ENCODE measurements at regions of chr2 and their contacts with region 1.

Region 1: DNA sequence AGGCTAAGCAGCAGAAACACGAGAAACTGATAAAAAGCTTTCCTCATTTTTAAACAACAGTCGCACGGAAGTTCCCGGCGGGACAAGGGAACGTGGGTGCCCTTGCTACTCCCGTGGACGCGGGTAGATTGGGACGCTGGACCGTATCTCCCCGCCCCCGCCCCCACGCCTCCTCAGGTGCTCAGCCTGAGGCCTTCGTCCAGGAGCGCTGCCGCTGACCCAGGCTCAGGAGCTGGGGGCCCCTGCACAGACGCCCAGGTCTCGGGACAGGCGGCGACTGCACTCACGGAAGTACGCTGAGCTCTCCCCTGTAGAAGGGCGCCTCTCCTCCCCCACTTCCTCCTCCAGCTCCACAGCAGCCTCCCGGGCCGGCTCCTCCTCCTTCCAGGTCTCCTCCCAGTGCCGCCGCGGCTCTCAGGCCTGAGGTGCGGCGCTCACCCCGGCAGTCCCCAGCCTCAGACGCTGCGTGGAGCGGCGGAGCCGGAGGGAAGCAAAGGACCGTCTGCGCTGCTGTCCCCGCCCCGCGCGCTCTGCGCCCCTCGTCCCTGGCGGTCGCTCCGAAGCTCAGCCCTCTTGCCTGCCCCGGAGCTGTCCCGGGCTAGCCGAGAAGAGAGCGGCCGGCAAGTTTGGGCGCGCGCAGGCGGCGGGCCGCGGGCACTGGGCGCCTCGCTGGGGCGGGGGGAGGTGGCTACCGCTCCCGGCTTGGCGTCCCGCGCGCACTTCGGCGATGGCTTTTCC is at the start of gene ITGAV:
- DNase-seq: peak; percentile 91 to 94
- ATAC-seq: peak; percentile 91 to 96 (median 92)
- H3K4me3 ChIP-seq: peak within 1 kb of the TSS; percentile 69
- H3K27ac ChIP-seq: peak within 1 kb of the TSS; percentile 89
- H3K4me1 ChIP-seq: peaks cover 19% of the 10 kb centered on the region
- H3K27me3 ChIP-seq: no peaks in the 10 kb centered on the region
- CTCF ChIP-seq: no peak
- total RNA-seq, gene ITGAV: 25.4 to 67.4 (median 55.4) TPM

Region 2: DNA sequence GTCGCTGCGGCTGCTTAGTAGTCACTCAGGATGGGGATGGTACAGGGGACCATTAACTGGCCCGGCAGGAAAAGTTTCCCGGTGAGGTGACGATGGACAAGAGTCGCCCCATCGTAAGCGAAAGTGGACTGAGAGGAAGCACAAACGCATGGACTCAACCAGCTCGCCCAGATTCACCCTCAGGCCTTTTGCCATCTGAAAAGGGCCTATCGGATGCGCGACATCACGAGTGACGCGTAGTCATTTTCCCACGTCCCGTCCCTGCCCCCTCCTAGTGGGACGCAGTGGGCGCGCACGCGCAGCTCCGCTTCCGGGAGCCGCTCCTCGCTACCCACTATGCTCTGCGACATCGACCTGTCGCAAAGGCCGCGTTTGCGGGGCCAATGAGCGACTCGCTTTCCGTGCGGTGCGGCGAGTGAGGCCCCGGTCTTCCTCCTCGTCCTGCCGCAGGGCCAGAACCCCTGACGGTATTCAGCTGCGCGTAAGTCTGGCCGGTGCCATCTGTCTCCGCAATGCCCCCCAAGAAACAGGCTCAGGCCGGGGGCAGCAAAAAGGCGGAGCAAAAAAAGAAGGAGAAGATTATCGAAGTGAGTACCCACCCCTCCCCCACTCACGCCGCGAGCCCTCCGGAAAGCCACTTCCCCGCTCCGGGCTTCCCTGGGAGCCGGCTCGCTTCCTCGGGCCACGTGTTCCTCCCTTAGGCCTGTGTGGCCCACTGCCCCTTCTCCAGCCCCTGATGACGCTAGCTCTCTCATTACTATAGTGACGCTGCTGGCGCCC is 103.7 kb before region 1 on chr2 and contains the start of gene ZC3H15:
- intact Hi-C with region 1: loop called in 1 of 2 experiments (anchors 5 kb)
- DNase-seq: peak; percentile 98 to 99
- ATAC-seq: peak; percentile 98
- H3K4me3 ChIP-seq: peak within 1 kb of the TSS; percentile 72
- H3K27ac ChIP-seq: peak within 1 kb of the TSS; percentile 94
- H3K4me1 ChIP-seq: peaks cover 40% of the 10 kb centered on the region
- H3K27me3 ChIP-seq: no peaks in the 10 kb centered on the region
- CTCF ChIP-seq: no peak
- total RNA-seq, gene ZC3H15: 31.1 to 56.3 (median 51.2) TPM

Region 3: DNA sequence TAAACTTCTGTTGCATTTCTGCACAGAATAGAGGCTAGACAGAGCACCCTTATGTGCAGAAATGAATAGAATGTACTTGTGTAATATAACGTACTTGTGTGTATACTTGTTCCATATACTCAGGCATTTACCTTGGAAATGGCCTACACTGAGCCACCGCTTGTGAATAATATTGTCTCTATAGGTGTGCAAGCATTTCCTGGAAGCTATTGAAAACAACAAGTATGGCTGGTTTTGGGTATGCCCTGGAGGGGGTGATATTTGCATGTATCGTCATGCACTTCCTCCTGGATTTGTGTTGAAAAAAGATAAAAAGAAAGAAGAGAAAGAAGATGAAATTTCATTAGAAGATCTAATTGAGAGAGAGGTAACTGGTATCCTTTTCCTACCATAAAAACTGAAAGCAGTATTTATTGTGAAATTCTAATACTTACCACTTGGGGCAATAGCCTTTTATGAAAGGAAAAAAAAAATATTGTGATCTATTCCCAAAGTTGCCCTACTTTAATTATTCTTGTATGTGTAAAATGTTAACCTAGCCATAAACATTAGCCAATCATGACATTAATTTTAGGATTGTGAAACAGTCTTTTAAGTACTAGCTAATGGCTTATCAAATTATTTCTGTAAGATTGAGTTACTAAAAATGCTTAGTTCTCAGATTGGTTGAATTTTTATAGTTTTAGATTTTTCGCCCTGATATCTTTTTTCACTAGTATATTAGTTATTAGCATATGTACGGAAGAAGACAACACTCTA is 85.8 kb before region 1 on chr2:
- intact Hi-C with region 1: loop called in 1 of 2 experiments (anchors 5 kb)
- DNase-seq: no peak
- ATAC-seq: peak in 1 of 4 donors; percentile 56
- H3K4me3 ChIP-seq: no peak overlapping the region
- H3K27ac ChIP-seq: no peak overlapping the region
- H3K4me1 ChIP-seq: no peaks in the 10 kb centered on the region
- H3K27me3 ChIP-seq: no peaks in the 10 kb centered on the region
- CTCF ChIP-seq: peak; percentile 58

Region 4: DNA sequence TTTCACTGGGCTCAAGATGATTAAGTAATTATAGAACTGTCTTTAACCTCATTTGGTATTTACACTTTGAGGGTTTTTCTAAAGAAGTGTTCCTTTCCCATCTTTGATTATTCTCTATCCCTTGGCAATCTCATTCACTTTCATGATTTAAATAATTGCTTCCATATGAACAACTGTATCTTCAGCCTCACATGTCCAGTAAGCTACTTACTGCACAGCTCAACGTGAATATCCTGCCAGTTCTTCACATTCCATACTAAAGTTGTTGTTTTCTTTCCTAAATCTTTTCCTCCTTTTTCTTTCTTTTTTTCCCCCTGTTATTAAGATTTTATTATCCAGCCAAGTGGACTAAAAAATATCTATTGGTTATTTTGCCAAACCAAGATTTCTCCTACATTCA is 66.0 kb before region 1 on chr2:
- intact Hi-C with region 1: loop called (anchors 5 to 10 kb)
- DNase-seq: no peak
- ATAC-seq: no peak
- H3K4me3 ChIP-seq: no peak overlapping the region
- H3K27ac ChIP-seq: no peak overlapping the region
- H3K4me1 ChIP-seq: no peaks in the 10 kb centered on the region
- H3K27me3 ChIP-seq: no peaks in the 10 kb centered on the region
- CTCF ChIP-seq: no peak

Region 5: GRCh38 chr2:186641807-186642321 is 52.1 kb after region 1 on chr2:
- intact Hi-C with region 1: loop called in 1 of 2 experiments (anchors 5 kb)
- DNase-seq: no peak
- ATAC-seq: peak; percentile 87 to 98 (median 93)
- H3K4me3 ChIP-seq: no peak overlapping the region
- H3K27ac ChIP-seq: no peak overlapping the region
- H3K4me1 ChIP-seq: no peaks in the 10 kb centered on the region
- H3K27me3 ChIP-seq: no peaks in the 10 kb centered on the region
- CTCF ChIP-seq: peak; percentile 79

Region 6: DNA sequence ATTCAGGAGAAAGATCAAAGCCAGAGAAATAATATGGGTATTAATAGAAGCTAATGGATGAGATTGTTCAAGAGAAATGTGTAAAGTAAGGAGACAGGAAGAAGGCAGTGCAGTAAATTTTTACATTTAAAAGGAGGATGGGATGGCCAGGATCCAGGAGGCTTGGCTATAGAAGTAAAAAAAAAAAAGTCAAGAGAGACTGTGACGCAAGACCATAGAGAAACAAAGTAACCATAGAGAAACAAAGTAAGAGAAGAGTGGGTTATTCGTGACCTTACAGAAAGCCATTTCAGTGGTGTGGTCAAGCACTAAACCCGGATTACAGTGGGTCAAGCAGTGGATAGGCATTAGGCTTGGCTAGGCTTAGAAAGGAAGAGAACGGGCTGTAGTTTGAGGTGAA is 93.6 kb after region 1 on chr2:
- intact Hi-C with region 1: no loop called
- DNase-seq: no peak
- ATAC-seq: no peak
- H3K4me3 ChIP-seq: no peak overlapping the region
- H3K27ac ChIP-seq: no peak overlapping the region
- H3K4me1 ChIP-seq: no peaks in the 10 kb centered on the region
- H3K27me3 ChIP-seq: no peaks in the 10 kb centered on the region
- CTCF ChIP-seq: no peak

Region 7: DNA sequence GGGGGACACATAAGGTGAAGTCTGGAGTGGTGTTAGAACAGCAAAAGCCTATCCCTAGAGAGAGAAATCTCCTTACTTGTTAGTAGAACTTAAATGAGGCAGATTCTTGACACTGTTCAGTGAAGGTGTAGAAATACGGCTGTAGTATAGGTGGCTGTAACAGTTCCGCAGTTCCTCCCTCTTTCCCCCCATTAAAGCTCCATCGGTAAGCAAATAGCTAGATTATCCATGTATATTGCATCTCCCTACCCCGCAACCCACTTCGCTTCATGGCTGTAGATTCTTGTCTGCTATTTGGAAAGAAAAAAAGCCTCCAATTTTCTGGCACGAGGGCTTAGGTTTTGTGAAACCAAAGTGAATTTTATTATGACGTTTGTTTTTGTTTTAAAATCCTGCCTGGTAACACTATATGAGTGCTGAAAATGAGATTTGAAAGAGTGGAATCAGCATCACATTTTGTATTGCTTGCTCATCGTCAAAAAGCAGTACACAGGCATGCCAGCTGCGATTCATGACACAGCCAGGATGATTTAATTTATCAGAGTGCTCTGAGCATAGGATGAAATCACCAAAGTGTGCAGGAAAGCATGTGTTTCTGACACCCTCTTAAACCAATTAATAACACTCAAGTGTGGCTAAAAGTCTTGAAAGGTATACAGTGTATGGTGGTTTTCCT is 105.4 kb after region 1 on chr2:
- intact Hi-C with region 1: no loop called
- DNase-seq: no peak
- ATAC-seq: peak in 2 of 4 donors; percentile 15 to 21
- H3K4me3 ChIP-seq: peak overlapping the region; percentile 36
- H3K27ac ChIP-seq: no peak overlapping the region
- H3K4me1 ChIP-seq: peaks cover 4% of the 10 kb centered on the region
- H3K27me3 ChIP-seq: peaks cover 0 to 7% (median 0%) of the 10 kb centered on the region in 3 donors
- CTCF ChIP-seq: no peak